GM13977 (cell line): ENCODE measurements at regions of chr17 and their contacts with region 1.

Region 1: DNA sequence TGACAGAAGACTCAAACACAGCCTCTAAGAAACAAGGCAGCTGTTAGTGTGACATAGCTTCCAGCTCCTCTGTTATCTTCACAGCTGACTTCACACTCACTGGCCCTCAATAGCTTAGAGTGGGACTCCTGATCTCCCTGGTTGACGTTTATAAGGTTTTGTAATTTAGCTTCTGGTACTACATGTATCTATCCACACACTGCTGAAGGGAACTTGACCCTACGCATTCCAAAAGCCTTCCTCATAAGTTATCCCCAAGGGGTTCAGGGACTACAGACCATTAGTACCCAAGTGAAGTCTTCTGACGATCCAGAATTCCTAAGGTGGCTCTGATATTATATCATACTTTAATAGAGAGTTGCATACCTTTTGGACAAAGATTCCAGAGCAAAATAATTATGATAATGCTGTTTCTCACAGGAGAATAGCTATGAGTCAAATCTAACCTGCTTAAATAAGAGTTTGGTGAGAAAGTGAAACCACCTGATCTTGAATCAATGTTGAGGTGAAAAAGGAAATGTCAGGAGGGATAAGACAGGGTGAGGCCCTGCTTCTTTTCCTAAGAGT is 14.5 kb downstream of the ACACA start:
- DNase-seq: peak; percentile 55
- CTCF ChIP-seq: no peak

Region 2: DNA sequence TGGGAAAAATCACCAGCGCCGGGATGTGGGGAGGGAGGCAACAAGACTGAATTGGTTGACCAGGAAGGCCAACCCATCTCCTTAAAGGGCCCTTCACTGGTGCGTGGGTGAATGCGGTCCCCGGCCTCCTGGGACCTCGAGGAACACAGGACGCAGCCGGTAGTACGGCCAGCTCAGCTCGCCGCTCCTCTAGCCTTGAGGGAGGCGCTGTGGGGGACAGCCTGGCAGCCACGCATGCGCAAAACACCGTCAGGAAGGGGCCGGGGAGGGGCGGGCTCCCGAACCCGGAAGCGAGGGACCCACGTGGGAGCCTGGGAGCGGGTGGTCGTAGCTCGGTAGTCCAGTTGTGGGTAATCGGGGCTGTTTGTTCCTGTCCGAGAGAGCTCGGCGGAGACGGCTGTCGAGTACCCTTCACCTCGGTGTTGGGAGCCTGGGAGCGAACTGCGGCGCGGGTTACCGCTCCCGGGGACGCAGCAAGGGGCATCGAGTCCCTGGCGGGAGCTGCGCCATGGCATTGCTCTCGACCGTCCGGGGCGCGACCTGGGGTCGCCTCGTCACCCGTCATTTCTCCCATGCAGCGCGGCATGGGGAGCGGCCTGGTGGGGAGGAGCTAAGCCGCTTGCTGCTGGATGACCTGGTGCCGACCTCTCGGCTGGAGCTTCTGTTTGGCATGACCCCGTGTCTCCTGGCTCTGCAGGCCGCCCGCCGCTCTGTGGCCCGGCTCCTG is 790.6 kb before region 1 on chr17 and contains the start of gene MRM1:
- in situ Hi-C with region 1: loop called (anchors 25 kb)
- DNase-seq: peak; percentile 94
- CTCF ChIP-seq: peak; percentile 34